AG04449 (cell line): ENCODE measurements at regions of chr6 and their contacts with region 1.

Region 1: DNA sequence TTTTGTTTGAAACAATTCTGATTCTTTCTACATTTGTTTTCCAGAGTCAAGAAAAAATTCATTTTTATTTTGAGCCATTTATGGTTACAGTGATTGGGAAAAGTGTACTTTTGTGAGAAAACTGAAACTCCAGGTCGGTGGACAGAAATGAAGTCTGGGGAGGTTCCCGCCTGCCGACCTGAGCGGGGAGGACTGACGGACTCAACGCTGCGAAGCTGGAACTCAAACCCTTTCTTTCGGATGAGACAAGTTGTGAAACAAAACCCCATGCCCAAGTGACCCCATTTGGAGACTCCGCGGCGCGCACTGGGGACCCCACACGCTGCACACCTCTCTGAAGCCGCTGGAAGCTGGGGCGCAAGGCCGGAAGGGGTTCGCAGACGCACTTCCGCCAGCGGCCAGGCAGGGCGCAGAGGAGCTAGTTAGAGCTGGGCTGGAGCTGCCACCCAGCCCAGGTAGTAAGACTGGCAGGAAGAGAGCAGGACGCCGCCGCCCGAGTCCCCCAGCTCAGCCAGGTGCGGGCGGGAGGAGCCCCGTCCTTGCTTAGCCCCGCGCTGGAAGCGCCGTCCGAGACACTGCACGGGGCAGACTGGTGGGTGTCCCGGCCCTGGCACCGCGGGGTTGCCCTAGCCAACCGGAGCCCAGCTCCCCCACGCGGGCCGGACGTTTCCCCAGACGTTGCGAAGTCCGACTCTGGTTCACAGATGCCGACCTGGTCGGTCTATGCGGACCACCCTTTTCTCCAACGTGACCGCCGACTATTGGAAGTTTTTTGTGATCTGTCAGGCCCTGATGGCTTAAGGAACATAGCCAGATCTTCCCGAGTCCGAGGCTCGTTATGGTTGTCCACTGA is 19.8 kb upstream of the ZSCAN16 start:
- DNase-seq: no peak
- H3K4me3 ChIP-seq: peak overlapping the region; percentile 73
- CTCF ChIP-seq: peak; percentile 84

Region 2: GRCh38 chr6:28060405-28060804 is 44.2 kb before region 1 on chr6:
- CTCF ChIA-PET with region 1: no interaction called
- POLR2A ChIA-PET with region 1: no interaction called
- DNase-seq: no peak
- H3K4me3 ChIP-seq: no peak overlapping the region
- CTCF ChIP-seq: no peak

Region 3: GRCh38 chr6:28117386-28118050 is 12.9 kb after region 1 on chr6:
- CTCF ChIA-PET with region 1: interaction called, 24 read pairs
- POLR2A ChIA-PET with region 1: interaction called, 3 read pairs
- DNase-seq: no peak
- H3K4me3 ChIP-seq: no peak overlapping the region
- CTCF ChIP-seq: no peak